B cell (primary cell): ENCODE measurements at regions of chr11 and their contacts with region 1.

Region 1: GRCh38 chr11:6682936-6683861 is at the start of gene MRPL17:
- DNase-seq: peak; percentile 100
- ATAC-seq: peak; percentile 96
- H3K4me3 ChIP-seq: peak within 1 kb of the TSS; percentile 80 to 91 (median 84)
- H3K4me3 Mint-ChIP-seq: peak within 1 kb of the TSS; percentile 99
- H3K27ac ChIP-seq: peak within 1 kb of the TSS; percentile 74 to 91
- H3K27ac Mint-ChIP-seq: peak within 1 kb of the TSS; percentile 99
- H3K4me1 ChIP-seq: peaks cover 12% of the 10 kb centered on the region in 2 donors
- H3K4me1 Mint-ChIP-seq: peaks cover 25% of the 10 kb centered on the region
- H3K27me3 ChIP-seq: no peaks in the 10 kb centered on the region
- H3K27me3 Mint-ChIP-seq: no peaks in the 10 kb centered on the region
- CTCF ChIP-seq: peak; percentile 88
- total RNA-seq, gene MRPL17: 18.2 and 23.1 TPM in 2 replicates

Region 2: GRCh38 chr11:6389921-6390724 is 293.1 kb before region 1 on chr11 and contains the start of gene SMPD1:
- CTCF ChIA-PET with region 1: no interaction called
- POLR2A ChIA-PET with region 1: interaction called, 4 read pairs
- intact Hi-C with region 1: loop called (anchors 1 kb)
- DNase-seq: peak; percentile 96
- ATAC-seq: peak; percentile 94
- H3K4me3 ChIP-seq: peak within 1 kb of the TSS; percentile 70 to 93 (median 85)
- H3K4me3 Mint-ChIP-seq: peak within 1 kb of the TSS; percentile 97
- H3K27ac ChIP-seq: peak within 1 kb of the TSS; percentile 98
- H3K27ac Mint-ChIP-seq: peak within 1 kb of the TSS; percentile 98
- H3K4me1 ChIP-seq: peaks cover 18 to 32% of the 10 kb centered on the region in 2 donors
- H3K4me1 Mint-ChIP-seq: peaks cover 32% of the 10 kb centered on the region
- H3K27me3 ChIP-seq: no peaks in the 10 kb centered on the region
- H3K27me3 Mint-ChIP-seq: no peaks in the 10 kb centered on the region
- CTCF ChIP-seq: no peak
- total RNA-seq, gene SMPD1: 18.3 TPM in 2 replicates

Region 3: GRCh38 chr11:6481012-6481923 is 201.9 kb before region 1 on chr11 and contains the starts of genes ARFIP2 and TIMM10B:
- CTCF ChIA-PET with region 1: interaction called, 3 read pairs
- POLR2A ChIA-PET with region 1: interaction called, 3 read pairs
- intact Hi-C with region 1: loop called (anchors 1 kb)
- DNase-seq: peak; percentile 98
- ATAC-seq: peak; percentile 96
- H3K4me3 ChIP-seq: peak within 1 kb of the TSS; percentile 26 to 92 (median 83)
- H3K4me3 Mint-ChIP-seq: peak within 1 kb of the TSS; percentile 97
- H3K27ac ChIP-seq: peak within 1 kb of the TSS; percentile 90 to 96
- H3K27ac Mint-ChIP-seq: peak within 1 kb of the TSS; percentile 97
- H3K4me1 ChIP-seq: peaks cover 20 to 27% of the 10 kb centered on the region in 2 donors
- H3K4me1 Mint-ChIP-seq: peaks cover 39% of the 10 kb centered on the region
- H3K27me3 ChIP-seq: no peaks in the 10 kb centered on the region
- H3K27me3 Mint-ChIP-seq: no peaks in the 10 kb centered on the region
- CTCF ChIP-seq: no peak
- total RNA-seq, gene ARFIP2: 46.8 and 47.5 TPM in 2 replicates
- total RNA-seq, gene TIMM10B: 62.1 and 63.7 TPM in 2 replicates

Region 4: GRCh38 chr11:6576471-6577373 is 106.5 kb before region 1 on chr11:
- CTCF ChIA-PET with region 1: no interaction called
- POLR2A ChIA-PET with region 1: no interaction called
- intact Hi-C with region 1: no loop called
- DNase-seq: no peak
- ATAC-seq: no peak
- H3K4me3 ChIP-seq: no peak overlapping the region
- H3K4me3 Mint-ChIP-seq: no peak overlapping the region
- H3K27ac ChIP-seq: no peak overlapping the region
- H3K27ac Mint-ChIP-seq: no peak overlapping the region
- H3K4me1 ChIP-seq: no peaks in the 10 kb centered on the region
- H3K4me1 Mint-ChIP-seq: no peaks in the 10 kb centered on the region
- H3K27me3 ChIP-seq: no peaks in the 10 kb centered on the region
- H3K27me3 Mint-ChIP-seq: no peaks in the 10 kb centered on the region
- CTCF ChIP-seq: no peak

Region 5: GRCh38 chr11:6603287-6604080 is 79.7 kb before region 1 on chr11 and contains the starts of genes ILK and RRP8:
- CTCF ChIA-PET with region 1: interaction called, 52 read pairs
- POLR2A ChIA-PET with region 1: interaction called, 6 read pairs
- intact Hi-C with region 1: loop called (anchors 1 kb)
- DNase-seq: peak; percentile 91
- ATAC-seq: peak; percentile 92
- H3K4me3 ChIP-seq: peak within 1 kb of the TSS; percentile 77 to 96 (median 93)
- H3K4me3 Mint-ChIP-seq: no peak within 1 kb of the TSS
- H3K27ac ChIP-seq: peak within 1 kb of the TSS; percentile 70 to 89
- H3K27ac Mint-ChIP-seq: no peak within 1 kb of the TSS
- H3K4me1 ChIP-seq: peaks cover 51 to 56% of the 10 kb centered on the region in 2 donors
- H3K4me1 Mint-ChIP-seq: peaks cover 42% of the 10 kb centered on the region
- H3K27me3 ChIP-seq: no peaks in the 10 kb centered on the region
- H3K27me3 Mint-ChIP-seq: no peaks in the 10 kb centered on the region
- CTCF ChIP-seq: peak; percentile 8
- total RNA-seq, gene ILK: 119 and 131 TPM in 2 replicates
- total RNA-seq, gene RRP8: 29.4 and 29.5 TPM in 2 replicates

Region 6: GRCh38 chr11:6619004-6619745 is 64.0 kb before region 1 on chr11 and contains the start of gene TPP1:
- CTCF ChIA-PET with region 1: interaction called, 35 read pairs
- POLR2A ChIA-PET with region 1: interaction called, 12 read pairs
- intact Hi-C with region 1: loop called (anchors 1 kb)
- DNase-seq: peak; percentile 97
- ATAC-seq: peak; percentile 92
- H3K4me3 ChIP-seq: peak within 1 kb of the TSS; percentile 82 to 100 (median 96)
- H3K4me3 Mint-ChIP-seq: no peak within 1 kb of the TSS
- H3K27ac ChIP-seq: peak within 1 kb of the TSS; percentile 94 to 97
- H3K27ac Mint-ChIP-seq: no peak within 1 kb of the TSS
- H3K4me1 ChIP-seq: peaks cover 19 to 33% of the 10 kb centered on the region in 2 donors
- H3K4me1 Mint-ChIP-seq: peaks cover 11% of the 10 kb centered on the region
- H3K27me3 ChIP-seq: no peaks in the 10 kb centered on the region
- H3K27me3 Mint-ChIP-seq: no peaks in the 10 kb centered on the region
- CTCF ChIP-seq: no peak
- total RNA-seq, gene TPP1: 191 and 200 TPM in 2 replicates

Region 7: GRCh38 chr11:6667733-6668374 is 15.3 kb before region 1 on chr11:
- CTCF ChIA-PET with region 1: interaction called, 11 read pairs
- POLR2A ChIA-PET with region 1: interaction called, 5 read pairs
- intact Hi-C with region 1: no loop called
- DNase-seq: peak; percentile 70
- ATAC-seq: peak; percentile 79
- H3K4me3 ChIP-seq: no peak overlapping the region
- H3K4me3 Mint-ChIP-seq: no peak overlapping the region
- H3K27ac ChIP-seq: no peak overlapping the region
- H3K27ac Mint-ChIP-seq: peak overlapping the region; percentile 34
- H3K4me1 ChIP-seq: peaks cover 0 to 5% of the 10 kb centered on the region in 2 donors
- H3K4me1 Mint-ChIP-seq: peaks cover 5% of the 10 kb centered on the region
- H3K27me3 ChIP-seq: no peaks in the 10 kb centered on the region
- H3K27me3 Mint-ChIP-seq: peaks cover 6% of the 10 kb centered on the region
- CTCF ChIP-seq: peak; percentile 75

Region 8: DNA sequence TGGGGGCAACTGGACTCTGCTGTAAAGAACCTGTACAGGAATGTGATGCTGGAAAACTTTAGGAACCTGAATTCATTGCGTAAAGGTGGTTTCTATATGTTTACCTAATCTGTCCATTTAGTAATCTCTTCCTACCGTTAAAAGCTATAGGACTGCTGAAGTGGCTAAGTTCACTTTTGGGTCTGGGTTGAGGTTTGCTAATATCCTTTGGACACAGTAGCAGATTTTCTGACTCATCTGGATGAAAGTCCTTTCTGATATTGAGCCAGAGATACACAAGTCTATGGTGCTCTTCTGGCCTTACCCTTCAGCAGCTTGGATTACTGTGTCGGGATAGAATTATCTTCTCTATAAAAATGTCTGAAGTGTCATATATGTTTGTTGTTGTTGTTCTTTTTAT is 259.9 kb after region 1 on chr11:
- CTCF ChIA-PET with region 1: no interaction called
- POLR2A ChIA-PET with region 1: no interaction called
- intact Hi-C with region 1: no loop called
- DNase-seq: no peak
- ATAC-seq: no peak
- H3K4me3 ChIP-seq: no peak overlapping the region
- H3K4me3 Mint-ChIP-seq: no peak overlapping the region
- H3K27ac ChIP-seq: no peak overlapping the region
- H3K27ac Mint-ChIP-seq: no peak overlapping the region
- H3K4me1 ChIP-seq: no peaks in the 10 kb centered on the region
- H3K4me1 Mint-ChIP-seq: peaks cover 2% of the 10 kb centered on the region
- H3K27me3 ChIP-seq: no peaks in the 10 kb centered on the region
- H3K27me3 Mint-ChIP-seq: no peaks in the 10 kb centered on the region
- CTCF ChIP-seq: no peak